Left lung (tissue), 14 donors: ENCODE measurements at regions of chr17 and their contacts with region 1.

Region 1: DNA sequence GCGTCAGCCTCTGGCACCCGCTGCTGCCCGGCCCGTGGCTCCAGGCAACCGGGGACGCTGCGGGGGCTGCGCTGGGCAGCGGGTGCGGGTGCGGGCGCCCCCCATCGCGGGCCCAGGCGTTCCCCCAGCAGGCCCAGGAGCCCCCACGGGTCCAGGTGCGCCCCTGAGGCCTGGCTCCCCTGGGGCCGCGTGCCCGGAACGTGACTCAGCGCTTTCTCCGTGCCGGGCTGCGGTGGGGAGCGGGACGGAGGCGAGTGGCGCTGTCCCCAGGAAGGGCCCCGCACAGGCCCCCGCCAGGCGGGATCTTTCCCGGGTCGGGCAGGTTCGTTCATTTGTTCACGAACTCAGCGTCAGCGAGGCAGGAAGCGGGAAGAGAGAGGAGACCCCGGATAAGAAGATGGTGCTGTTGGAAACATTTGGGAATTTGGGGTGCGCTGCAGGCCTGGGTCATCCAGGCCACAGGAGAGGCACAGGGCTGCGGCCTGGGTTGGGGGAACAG is 18.4 kb upstream of the EXOC7 start:
- DNase-seq: peak in 1 of 4 donors; percentile 84
- ATAC-seq: peak; percentile 49
- H3K4me3 ChIP-seq: peak overlapping the region; percentile 15 to 30
- H3K27ac ChIP-seq: no peak overlapping the region
- H3K4me1 ChIP-seq: peaks cover 3 to 9% of the 10 kb centered on the region in 2 donors
- H3K27me3 ChIP-seq: peaks cover 0 to 6% of the 10 kb centered on the region in 2 donors
- CTCF ChIP-seq: no peak

Region 2: GRCh38 chr17:76153640-76154039 is 31.7 kb after region 1 on chr17:
- intact Hi-C with region 1: no loop called
- DNase-seq: peak in 1 of 4 donors; percentile 5
- ATAC-seq: peak; percentile 47
- H3K4me3 ChIP-seq: no peak overlapping the region
- H3K27ac ChIP-seq: no peak overlapping the region
- H3K4me1 ChIP-seq: no peaks in the 10 kb centered on the region
- H3K27me3 ChIP-seq: no peaks in the 10 kb centered on the region
- CTCF ChIP-seq: no peak

Region 3: DNA sequence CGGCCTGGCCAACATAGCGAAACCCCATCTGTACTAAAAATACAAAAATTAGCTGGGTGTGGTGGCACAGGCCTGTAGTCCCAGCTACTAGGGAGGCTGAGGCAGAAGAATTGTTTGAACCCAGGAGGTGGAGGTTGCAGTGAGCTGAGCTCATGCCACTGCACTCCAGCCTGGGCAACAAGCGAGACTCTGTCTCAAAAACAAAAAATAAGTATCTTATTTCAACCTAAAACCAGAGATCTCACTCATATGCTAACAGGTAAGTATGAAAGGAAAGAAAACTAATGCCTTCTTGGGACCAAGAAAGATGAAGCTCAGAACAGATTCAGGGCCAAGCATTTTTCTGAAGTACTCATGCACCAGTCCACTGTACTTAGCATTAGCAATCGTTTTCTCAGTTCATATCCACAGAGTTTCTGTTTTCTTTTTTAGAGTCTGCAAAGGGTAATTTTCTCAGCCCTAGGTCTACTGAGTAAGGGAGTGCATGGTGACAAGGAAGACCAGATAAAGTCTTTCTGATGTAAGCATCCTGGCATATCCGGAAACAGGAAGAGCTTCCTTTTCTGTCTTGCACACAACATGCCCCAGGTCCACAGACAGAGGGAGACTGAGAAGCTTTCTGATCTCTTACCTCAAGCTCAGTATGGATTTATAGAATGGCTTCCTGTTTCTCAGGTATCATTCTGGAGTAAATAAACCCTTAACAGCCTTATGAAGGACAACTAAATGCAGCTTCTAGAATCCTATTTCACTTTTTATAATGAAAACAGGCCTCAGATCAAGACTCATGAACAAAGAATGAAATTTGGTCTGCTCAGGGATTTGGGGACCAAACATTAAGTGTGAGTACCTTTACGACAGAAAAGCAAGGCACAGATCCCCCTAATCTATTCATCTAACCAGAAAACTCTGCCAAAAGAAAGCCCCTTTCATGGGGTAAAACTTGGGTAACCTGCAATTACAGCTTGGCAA is 57.8 kb after region 1 on chr17:
- intact Hi-C with region 1: loop called in 1 of 2 experiments (anchors 5 kb)
- DNase-seq: no peak
- ATAC-seq: no peak
- H3K4me3 ChIP-seq: no peak overlapping the region
- H3K27ac ChIP-seq: peak overlapping the region in 1 of 2 donors; percentile 5
- H3K4me1 ChIP-seq: peaks cover 0 to 17% of the 10 kb centered on the region in 2 donors
- H3K27me3 ChIP-seq: no peaks in the 10 kb centered on the region
- CTCF ChIP-seq: no peak

Region 4: DNA sequence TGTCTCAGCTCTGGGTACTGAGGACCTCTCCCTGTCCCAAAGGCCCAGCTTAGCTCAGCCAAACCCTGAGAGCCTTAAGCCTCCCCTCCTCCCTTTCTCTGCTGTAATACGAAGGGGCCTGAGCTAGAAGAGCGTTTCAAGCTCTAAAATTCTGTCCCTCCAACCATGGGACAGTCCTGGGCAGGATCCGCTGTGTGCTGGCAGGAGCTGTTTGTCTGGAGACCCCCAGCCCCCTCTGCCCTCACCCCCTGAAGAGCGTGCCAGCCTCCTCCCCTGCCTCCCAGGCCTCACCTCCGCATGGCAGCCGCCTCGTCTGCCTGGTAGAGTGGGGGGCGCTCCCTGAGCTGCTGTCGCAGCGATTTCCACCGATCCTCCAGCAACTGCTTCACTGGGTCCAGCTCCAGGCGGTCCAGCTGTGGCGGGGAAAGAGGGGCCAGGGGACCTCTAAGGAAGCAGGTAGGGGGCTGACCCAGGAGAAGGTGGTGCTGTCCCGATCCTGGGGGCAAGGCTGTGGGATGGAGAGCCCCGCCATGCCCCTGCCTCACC is 157.8 kb after region 1 on chr17:
- intact Hi-C with region 1: loop called in 1 of 2 experiments (anchors 5 kb)
- DNase-seq: no peak
- ATAC-seq: no peak
- H3K4me3 ChIP-seq: no peak overlapping the region
- H3K27ac ChIP-seq: no peak overlapping the region
- H3K4me1 ChIP-seq: peaks cover 0 to 9% of the 10 kb centered on the region in 2 donors
- H3K27me3 ChIP-seq: no peaks in the 10 kb centered on the region
- CTCF ChIP-seq: peak in 1 of 2 donors; percentile 42